AG04450 (cell line): ENCODE measurements at regions of chrX and their contacts with region 1.

Region 1: DNA sequence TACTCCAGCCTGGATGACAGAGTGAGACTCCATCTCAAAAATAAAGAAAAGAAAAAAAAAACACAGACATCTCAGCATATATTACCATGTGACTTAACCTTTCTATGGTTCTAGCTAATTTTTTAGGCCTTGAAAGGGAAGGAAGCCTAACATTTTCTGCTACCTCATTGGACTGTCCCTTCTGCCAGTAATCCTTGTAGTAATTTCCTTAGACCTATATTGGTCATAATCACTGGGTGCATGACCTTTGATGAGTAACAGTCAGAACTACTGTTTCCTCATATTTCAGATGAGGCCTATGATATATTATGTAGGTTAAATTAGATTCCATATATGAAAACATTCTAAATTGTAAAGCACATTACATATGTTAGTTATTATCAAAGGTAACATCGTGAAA is 9.6 kb downstream of the XIAP start:
- DNase-seq: no peak
- H3K4me3 ChIP-seq: no peak overlapping the region
- H3K27ac ChIP-seq: no peak overlapping the region
- H3K27me3 ChIP-seq: no peaks in the 10 kb centered on the region
- CTCF ChIP-seq: no peak

Region 2: DNA sequence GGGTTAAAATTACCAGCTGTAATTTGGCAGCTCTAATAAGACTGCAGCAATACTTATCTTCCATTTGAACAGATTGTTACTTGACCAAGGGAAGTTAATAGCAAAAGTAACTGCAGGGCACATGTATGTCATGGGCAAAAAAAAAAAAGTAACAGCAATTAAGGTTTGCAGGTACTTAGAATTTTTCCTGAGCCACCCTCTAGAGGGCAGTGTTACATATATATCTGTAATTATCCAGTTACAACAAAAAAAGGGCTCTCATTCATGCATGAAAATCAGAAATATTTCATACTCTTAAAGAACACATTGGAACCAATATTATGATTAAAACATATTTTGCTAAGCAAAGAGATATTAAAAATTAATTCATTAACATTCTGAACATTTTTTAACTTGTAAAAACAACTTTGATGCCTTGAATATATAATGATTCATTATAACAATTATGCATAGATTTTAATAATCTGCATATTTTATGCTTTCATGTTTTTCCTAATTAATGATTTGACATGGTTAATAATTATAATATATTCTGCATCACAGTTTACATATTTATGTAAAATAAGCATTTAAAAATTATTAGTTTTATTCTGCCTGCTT is 15.4 kb after region 1 on chrX:
- CTCF ChIA-PET with region 1: interaction called, 11 read pairs
- POLR2A ChIA-PET with region 1: no interaction called
- DNase-seq: no peak
- H3K4me3 ChIP-seq: no peak overlapping the region
- H3K27ac ChIP-seq: no peak overlapping the region
- H3K27me3 ChIP-seq: no peaks in the 10 kb centered on the region
- CTCF ChIP-seq: peak; percentile 51